ENCODE measurements at regions of chr18 and their contacts with region 1.

Region 1: DNA sequence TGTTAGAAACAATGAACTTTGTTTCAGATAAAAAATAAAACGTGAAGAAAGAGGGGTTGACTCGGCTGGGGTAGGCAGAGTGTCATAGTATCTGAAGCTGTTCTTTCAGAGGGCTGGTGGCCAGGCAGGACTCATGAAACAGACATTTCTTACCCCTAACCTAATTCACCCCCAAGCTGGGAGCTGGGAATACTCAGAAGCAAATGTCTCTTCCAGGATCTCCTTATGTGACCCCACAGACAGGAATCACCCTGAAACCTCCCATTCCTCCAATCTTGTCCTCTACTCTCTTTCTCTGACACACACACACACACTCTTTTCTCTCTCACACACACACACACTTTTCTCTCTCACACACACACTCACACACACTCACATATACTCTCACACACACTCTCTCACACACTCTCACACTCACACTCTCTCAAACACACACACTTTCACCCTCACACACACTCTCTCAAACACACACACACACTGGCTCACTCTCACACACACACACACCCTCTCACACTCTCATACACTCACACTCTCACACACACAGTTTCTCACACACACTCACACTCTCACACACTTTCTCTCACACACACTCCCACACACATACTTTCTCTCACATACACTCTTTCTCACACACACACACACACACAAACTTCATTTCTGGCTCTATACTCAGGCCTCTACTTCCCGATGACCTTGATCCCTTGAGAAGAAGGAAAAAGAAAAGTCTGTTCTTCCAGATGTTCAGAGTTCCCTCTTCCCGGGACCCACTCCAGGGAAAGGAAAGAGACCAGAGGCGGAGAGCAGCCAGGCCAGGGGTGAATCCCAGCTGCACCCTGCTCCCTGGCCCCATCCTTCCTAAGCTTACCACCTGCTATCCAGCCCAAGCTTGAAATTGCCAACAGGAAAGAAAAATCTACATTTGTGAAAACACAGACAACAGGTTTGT is 167.7 kb downstream of the TXNL1 start:
- DNase-seq: no peak
- H3K4me3 ChIP-seq: no peak overlapping the region
- H3K27ac ChIP-seq: no peak overlapping the region
- H3K4me1 ChIP-seq: no peaks in the 10 kb centered on the region
- H3K27me3 ChIP-seq: no peaks in the 10 kb centered on the region
- CTCF ChIP-seq: no peak
- POLR2A ChIP-seq: no peak

Region 2: GRCh38 chr18:55087998-55088401 is 1382.7 kb before region 1 on chr18:
- intact Hi-C with region 1: loop called (anchors 5 kb)
- DNase-seq: no peak
- H3K4me3 ChIP-seq: no peak overlapping the region
- H3K27ac ChIP-seq: no peak overlapping the region
- H3K4me1 ChIP-seq: no peaks in the 10 kb centered on the region
- H3K27me3 ChIP-seq: no peaks in the 10 kb centered on the region
- CTCF ChIP-seq: no peak
- POLR2A ChIP-seq: no peak

Region 3: DNA sequence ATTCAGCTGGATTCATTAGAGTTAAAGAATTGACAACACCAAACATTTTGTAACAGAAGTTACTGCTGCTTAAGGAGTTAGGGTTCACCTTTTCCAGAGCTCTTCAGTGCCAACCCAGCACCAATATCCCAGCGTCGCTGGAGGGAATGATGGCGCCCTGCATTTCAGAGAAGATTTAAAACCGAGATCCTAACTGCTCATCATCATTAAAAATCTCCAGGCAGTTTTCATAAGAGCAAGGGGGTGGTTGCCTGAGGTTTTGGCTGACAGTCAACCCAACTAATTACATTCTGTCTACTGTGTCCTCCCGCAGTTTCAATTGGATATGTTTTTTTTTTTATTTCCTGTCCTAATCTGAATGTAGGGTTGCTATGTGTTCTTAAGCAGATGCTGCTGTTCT is 373.1 kb before region 1 on chr18:
- intact Hi-C with region 1: no loop called
- DNase-seq: no peak
- H3K4me3 ChIP-seq: no peak overlapping the region
- H3K27ac ChIP-seq: no peak overlapping the region
- H3K4me1 ChIP-seq: no peaks in the 10 kb centered on the region
- H3K27me3 ChIP-seq: no peaks in the 10 kb centered on the region
- CTCF ChIP-seq: no peak
- POLR2A ChIP-seq: no peak

Region 4: DNA sequence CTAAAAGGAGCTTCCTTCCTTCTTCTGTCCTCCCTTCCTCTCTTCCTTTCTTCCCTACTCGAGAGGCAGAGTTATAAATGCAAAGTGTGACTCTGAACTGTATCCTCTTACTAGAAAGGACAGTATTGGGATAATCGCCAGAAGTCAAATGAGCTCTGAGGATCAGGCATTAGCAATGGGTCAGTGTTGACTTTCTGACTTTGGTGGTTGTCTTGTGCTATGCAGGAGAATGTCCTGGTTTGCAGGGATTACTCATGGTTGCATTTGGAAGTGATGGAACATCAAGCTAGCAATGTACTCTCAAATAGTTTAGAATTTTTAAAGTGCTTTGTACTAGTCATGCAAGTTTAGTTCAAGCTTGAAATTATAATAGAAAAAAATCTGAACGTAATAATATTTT is 52.1 kb after region 1 on chr18:
- intact Hi-C with region 1: no loop called
- DNase-seq: no peak
- H3K4me3 ChIP-seq: no peak overlapping the region
- H3K27ac ChIP-seq: no peak overlapping the region
- H3K4me1 ChIP-seq: no peaks in the 10 kb centered on the region
- H3K27me3 ChIP-seq: no peaks in the 10 kb centered on the region
- CTCF ChIP-seq: no peak
- POLR2A ChIP-seq: no peak

Region 5: GRCh38 chr18:56804395-56804794 is 333.7 kb after region 1 on chr18:
- intact Hi-C with region 1: no loop called
- DNase-seq: no peak
- H3K4me3 ChIP-seq: no peak overlapping the region
- H3K27ac ChIP-seq: no peak overlapping the region
- H3K4me1 ChIP-seq: no peaks in the 10 kb centered on the region
- H3K27me3 ChIP-seq: no peaks in the 10 kb centered on the region
- CTCF ChIP-seq: no peak
- POLR2A ChIP-seq: no peak

Measured in breast epithelium (tissue), 4 donors.